ENCODE measurements at regions of chr9 and their contacts with region 1.

Region 1: GRCh38 chr9:88197781-88198340 is 59.6 kb upstream of the SPATA31C2 start:
- DNase-seq: no peak
- ATAC-seq: no peak
- H3K4me3 ChIP-seq: peak overlapping the region; percentile 26 to 30
- H3K27ac ChIP-seq: no peak overlapping the region
- H3K4me1 ChIP-seq: peaks cover 0 to 4% of the 10 kb centered on the region in 2 donors
- H3K27me3 ChIP-seq: no peaks in the 10 kb centered on the region

Region 2: GRCh38 chr9:87959916-87960581 is 237.8 kb before region 1 on chr9:
- intact Hi-C with region 1: no loop called
- DNase-seq: no peak
- ATAC-seq: no peak
- H3K4me3 ChIP-seq: no peak overlapping the region
- H3K27ac ChIP-seq: no peak overlapping the region
- H3K4me1 ChIP-seq: no peaks in the 10 kb centered on the region
- H3K27me3 ChIP-seq: no peaks in the 10 kb centered on the region

Region 3: GRCh38 chr9:88258027-88258426 is 60.2 kb after region 1 on chr9:
- intact Hi-C with region 1: loop called in 1 of 2 experiments (anchors 5 kb)
- DNase-seq: peak in 1 of 2 donors; percentile 76
- ATAC-seq: no peak
- H3K4me3 ChIP-seq: no peak overlapping the region
- H3K27ac ChIP-seq: no peak overlapping the region
- H3K4me1 ChIP-seq: no peaks in the 10 kb centered on the region
- H3K27me3 ChIP-seq: no peaks in the 10 kb centered on the region

Region 4: GRCh38 chr9:88583901-88584596 is 386.2 kb after region 1 on chr9:
- intact Hi-C with region 1: loop called in 1 of 2 experiments (anchors 10 kb)
- DNase-seq: no peak
- ATAC-seq: no peak
- H3K4me3 ChIP-seq: no peak overlapping the region
- H3K27ac ChIP-seq: no peak overlapping the region
- H3K4me1 ChIP-seq: no peaks in the 10 kb centered on the region
- H3K27me3 ChIP-seq: no peaks in the 10 kb centered on the region